ENCODE measurements at regions of chr3 and their contacts with region 1.

Region 1: GRCh38 chr3:126982471-126983175 is at the start of gene PLXNA1:
- DNase-seq: peak; percentile 15 to 94
- H3K4me3 ChIP-seq: peak within 1 kb of the TSS; percentile 67 to 87 (median 73)
- H3K27ac ChIP-seq: no peak within 1 kb of the TSS
- H3K4me1 ChIP-seq: peaks cover 0 to 26% (median 12%) of the 10 kb centered on the region in 4 experiments; a peak in 6 of 7 replicates
- H3K27me3 ChIP-seq: peaks cover 0 to 8% (median 3%) of the 10 kb centered on the region in 4 experiments; a peak in 5 of 7 replicates
- CTCF ChIP-seq: peak in 2 of 3 experiments; percentile 82 to 88; a peak in 3 of 4 replicates
- EP300 ChIP-seq: no peak
- POLR2A ChIP-seq: no peak
- RAD21 ChIP-seq: peak; percentile 26 to 50; a peak in 3 of 4 replicates
- total RNA-seq, gene PLXNA1: 47.5 and 50.8 TPM in 2 replicates

Region 2: DNA sequence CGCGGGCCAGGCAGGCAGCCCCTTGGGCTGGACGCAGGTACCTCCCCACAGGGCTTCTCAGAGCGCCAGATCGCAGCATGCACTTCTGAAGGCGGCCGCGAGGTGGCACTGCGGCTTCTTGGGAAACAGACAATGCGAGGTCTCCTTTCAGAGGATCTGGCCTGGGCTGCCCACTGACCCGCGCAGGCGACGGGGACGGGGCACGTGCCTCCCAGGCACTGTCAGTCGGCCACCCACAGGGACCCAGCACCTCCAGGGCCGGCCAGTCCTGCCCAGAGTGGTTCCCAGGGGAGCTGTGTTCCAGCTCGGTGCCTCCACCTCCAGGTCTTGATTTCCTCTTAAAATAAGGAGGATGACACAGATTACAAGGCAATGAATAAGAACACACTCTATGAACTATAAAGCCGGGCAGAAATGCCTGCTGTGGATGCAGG is 303.3 kb before region 1 on chr3:
- CTCF ChIA-PET with region 1: interaction called, 14 read pairs
- POLR2A ChIA-PET with region 1: no interaction called
- DNase-seq: peak; percentile 79 to 99
- H3K4me3 ChIP-seq: peak overlapping the region in 1 of 4 experiments; percentile 45; a peak in 1 of 8 replicates
- H3K27ac ChIP-seq: no peak overlapping the region
- H3K4me1 ChIP-seq: peaks cover 0 to 8% (median 6%) of the 10 kb centered on the region in 4 experiments; a peak in 5 of 7 replicates
- H3K27me3 ChIP-seq: peaks cover 2 to 19% (median 14%) of the 10 kb centered on the region in 4 experiments; a peak in 6 of 7 replicates
- CTCF ChIP-seq: peak; percentile 93 to 94 (median 94)
- EP300 ChIP-seq: no peak
- POLR2A ChIP-seq: no peak
- RAD21 ChIP-seq: peak; percentile 91 to 96

Region 3: GRCh38 chr3:126721246-126721645 is 261.4 kb before region 1 on chr3:
- CTCF ChIA-PET with region 1: no interaction called
- POLR2A ChIA-PET with region 1: no interaction called
- DNase-seq: no peak
- H3K4me3 ChIP-seq: no peak overlapping the region
- H3K27ac ChIP-seq: no peak overlapping the region
- H3K4me1 ChIP-seq: peaks cover 0 to 10% (median 0%) of the 10 kb centered on the region in 4 experiments; a peak in 2 of 7 replicates
- H3K27me3 ChIP-seq: no peaks in the 10 kb centered on the region
- CTCF ChIP-seq: no peak
- EP300 ChIP-seq: no peak
- POLR2A ChIP-seq: no peak
- RAD21 ChIP-seq: no peak

Region 4: GRCh38 chr3:126777366-126777765 is 205.3 kb before region 1 on chr3:
- CTCF ChIA-PET with region 1: no interaction called
- POLR2A ChIA-PET with region 1: no interaction called
- DNase-seq: no peak
- H3K4me3 ChIP-seq: no peak overlapping the region
- H3K27ac ChIP-seq: no peak overlapping the region
- H3K4me1 ChIP-seq: peaks cover 1 to 5% (median 4%) of the 10 kb centered on the region in 4 experiments; a peak in 6 of 7 replicates
- H3K27me3 ChIP-seq: no peaks in the 10 kb centered on the region
- CTCF ChIP-seq: no peak
- EP300 ChIP-seq: no peak
- POLR2A ChIP-seq: no peak
- RAD21 ChIP-seq: no peak

Region 5: DNA sequence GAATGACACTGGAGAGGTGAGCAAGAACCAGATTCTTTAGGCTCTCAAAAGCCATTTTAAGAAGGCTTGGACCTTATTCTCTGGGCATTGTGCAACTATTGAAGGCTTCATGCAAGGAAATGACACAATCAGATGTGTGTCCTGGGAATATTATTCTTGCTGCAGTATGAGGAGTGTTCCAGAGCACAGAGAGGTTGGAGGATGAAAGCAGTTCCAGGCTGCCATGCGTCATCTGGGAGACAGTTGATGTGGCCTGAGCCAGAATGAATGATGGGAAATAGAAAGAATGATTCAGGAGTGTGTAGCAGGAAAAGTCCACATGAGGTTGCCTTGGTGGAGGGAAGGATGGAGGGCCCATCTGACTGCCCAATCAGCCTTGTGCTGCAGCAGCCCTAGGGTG is 155.5 kb before region 1 on chr3:
- CTCF ChIA-PET with region 1: no interaction called
- POLR2A ChIA-PET with region 1: no interaction called
- DNase-seq: no peak
- H3K4me3 ChIP-seq: no peak overlapping the region
- H3K27ac ChIP-seq: no peak overlapping the region
- H3K4me1 ChIP-seq: no peaks in the 10 kb centered on the region
- H3K27me3 ChIP-seq: no peaks in the 10 kb centered on the region
- CTCF ChIP-seq: no peak
- EP300 ChIP-seq: no peak
- POLR2A ChIP-seq: no peak
- RAD21 ChIP-seq: no peak

Region 6: DNA sequence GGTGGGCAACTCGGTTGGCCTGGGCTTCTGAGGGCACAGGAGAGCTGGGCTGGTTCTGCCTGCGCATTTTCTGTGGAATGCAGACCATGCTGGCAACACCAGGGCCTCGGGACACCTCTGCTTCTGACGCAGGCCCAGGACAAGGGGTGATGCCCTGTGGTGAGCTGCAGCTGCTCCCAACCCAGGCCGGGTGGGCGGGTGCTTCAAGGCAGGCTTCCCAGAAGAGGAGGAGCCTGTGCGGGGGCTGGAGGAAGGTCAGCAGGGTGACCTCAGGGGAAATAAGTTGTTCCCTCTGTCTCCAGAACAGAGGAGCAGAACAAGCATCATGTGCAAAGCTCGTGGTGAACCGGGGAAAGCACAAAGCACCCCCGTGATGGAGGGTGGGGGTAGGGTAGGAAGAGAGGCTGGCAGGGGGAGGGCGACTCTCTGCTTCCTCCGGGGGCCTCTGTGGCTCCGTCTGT is 10.7 kb before region 1 on chr3:
- CTCF ChIA-PET with region 1: interaction called, 21 read pairs
- POLR2A ChIA-PET with region 1: interaction called, 4 read pairs
- DNase-seq: no peak
- H3K4me3 ChIP-seq: no peak overlapping the region
- H3K27ac ChIP-seq: no peak overlapping the region
- H3K4me1 ChIP-seq: peaks cover 2 to 10% (median 5%) of the 10 kb centered on the region in 4 experiments; a peak in 4 of 7 replicates
- H3K27me3 ChIP-seq: no peaks in the 10 kb centered on the region
- CTCF ChIP-seq: no peak
- EP300 ChIP-seq: no peak
- POLR2A ChIP-seq: no peak
- RAD21 ChIP-seq: no peak

Region 7: DNA sequence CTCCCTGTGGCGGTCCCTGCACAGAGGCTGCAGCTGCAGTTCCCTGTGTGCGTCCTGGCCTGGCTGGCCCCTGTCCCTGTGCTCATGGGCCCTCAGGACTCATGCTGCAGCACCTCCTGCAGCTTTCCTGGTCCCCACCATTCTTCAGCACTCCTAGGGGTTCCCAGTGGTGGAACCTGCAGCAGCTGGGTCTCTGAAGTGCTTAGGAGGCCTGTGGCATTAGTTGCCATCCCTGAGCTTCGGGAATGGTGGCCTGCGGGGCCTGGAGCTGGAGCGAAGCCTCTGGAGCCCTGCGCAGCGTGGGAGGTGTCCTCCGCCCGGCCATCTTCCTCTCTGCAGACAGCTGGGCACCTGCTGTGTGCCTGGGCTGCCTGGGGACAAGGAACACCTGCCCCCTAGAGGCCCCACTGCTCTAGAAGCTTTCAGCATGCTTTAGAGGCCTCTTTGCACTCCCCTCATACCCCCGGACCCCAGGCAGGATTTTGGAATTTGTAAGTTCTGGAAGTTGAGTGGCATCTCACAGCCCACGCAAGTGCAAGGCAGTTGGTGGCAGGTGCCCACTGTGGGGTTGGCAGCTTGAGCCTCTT is 13.4 kb after region 1 on chr3:
- CTCF ChIA-PET with region 1: interaction called, 14 read pairs
- POLR2A ChIA-PET with region 1: interaction called, 9 read pairs
- DNase-seq: no peak
- H3K4me3 ChIP-seq: no peak overlapping the region
- H3K27ac ChIP-seq: no peak overlapping the region
- H3K4me1 ChIP-seq: peaks cover 0 to 5% (median 2%) of the 10 kb centered on the region in 4 experiments; a peak in 4 of 7 replicates
- H3K27me3 ChIP-seq: no peaks in the 10 kb centered on the region
- CTCF ChIP-seq: peak in 1 of 3 experiments; percentile 34; a peak in 1 of 4 replicates
- EP300 ChIP-seq: no peak
- POLR2A ChIP-seq: no peak
- RAD21 ChIP-seq: peak; percentile 9 to 31; a peak in 1 of 4 replicates

Region 8: GRCh38 chr3:127002195-127003174 is 19.9 kb after region 1 on chr3:
- CTCF ChIA-PET with region 1: interaction called, 11 read pairs
- POLR2A ChIA-PET with region 1: interaction called, 9 read pairs
- DNase-seq: peak; percentile 58 to 90
- H3K4me3 ChIP-seq: no peak overlapping the region
- H3K27ac ChIP-seq: 0 out of 2 replicates have a peak overlapping the region, but pooled peaks have one; percentile 58
- H3K4me1 ChIP-seq: peaks cover 0 to 20% (median 14%) of the 10 kb centered on the region in 4 experiments; a peak in 6 of 7 replicates
- H3K27me3 ChIP-seq: no peaks in the 10 kb centered on the region
- CTCF ChIP-seq: peak in 2 of 3 experiments; percentile 78 to 84; a peak in 3 of 4 replicates
- EP300 ChIP-seq: peak in 1 of 2 experiments; percentile 87; a peak in 1 of 3 replicates
- POLR2A ChIP-seq: no peak
- RAD21 ChIP-seq: peak; percentile 62 to 76